ENCODE measurements at regions of chr5 and their contacts with region 1.

Region 1: GRCh38 chr5:132456296-132457001 is 34.1 kb downstream of the IRF1 start:
- DNase-seq: peak; percentile 41 to 60
- ATAC-seq: peak in 1 of 2 donors; percentile 2
- H3K4me3 ChIP-seq: no peak overlapping the region
- H3K27ac ChIP-seq: peak overlapping the region; percentile 74 to 95 (median 82)
- H3K4me1 ChIP-seq: peaks cover 42 to 53% of the 10 kb centered on the region in 2 donors
- H3K27me3 ChIP-seq: no peaks in the 10 kb centered on the region
- CTCF ChIP-seq: no peak
- POLR2A ChIP-seq: no peak

Region 2: GRCh38 chr5:132480042-132480441 is 23.6 kb after region 1 on chr5:
- in situ Hi-C with region 1: no loop called
- intact Hi-C with region 1: loop called (anchors 2 kb)
- DNase-seq: no peak
- ATAC-seq: no peak
- H3K4me3 ChIP-seq: no peak overlapping the region
- H3K27ac ChIP-seq: no peak overlapping the region
- H3K4me1 ChIP-seq: peaks cover 0 to 5% of the 10 kb centered on the region in 2 donors
- H3K27me3 ChIP-seq: no peaks in the 10 kb centered on the region
- CTCF ChIP-seq: no peak
- POLR2A ChIP-seq: no peak

Region 3: GRCh38 chr5:132639706-132640130 is 183.3 kb after region 1 on chr5:
- in situ Hi-C with region 1: no loop called
- intact Hi-C with region 1: loop called (anchors 5 kb)
- DNase-seq: no peak
- ATAC-seq: no peak
- H3K4me3 ChIP-seq: no peak overlapping the region
- H3K27ac ChIP-seq: no peak overlapping the region
- H3K4me1 ChIP-seq: no peaks in the 10 kb centered on the region
- H3K27me3 ChIP-seq: no peaks in the 10 kb centered on the region
- CTCF ChIP-seq: no peak
- POLR2A ChIP-seq: no peak